IMR-90 (cell line): ENCODE measurements at regions of chr7 and their contacts with region 1.

Region 1: GRCh38 chr7:22219739-22220493 is 137.0 kb downstream of the RAPGEF5 start:
- DNase-seq: no peak
- ATAC-seq: no peak
- H3K4me3 ChIP-seq: no peak overlapping the region
- H3K27ac ChIP-seq: no peak overlapping the region
- H3K4me1 ChIP-seq: no peaks in the 10 kb centered on the region
- H3K27me3 ChIP-seq: peaks cover 2% of the 10 kb centered on the region; the same call in 1 of the 2 replicates
- CTCF ChIP-seq: no peak
- POLR2A ChIP-seq: no peak
- RAD21 ChIP-seq: no peak

Region 2: DNA sequence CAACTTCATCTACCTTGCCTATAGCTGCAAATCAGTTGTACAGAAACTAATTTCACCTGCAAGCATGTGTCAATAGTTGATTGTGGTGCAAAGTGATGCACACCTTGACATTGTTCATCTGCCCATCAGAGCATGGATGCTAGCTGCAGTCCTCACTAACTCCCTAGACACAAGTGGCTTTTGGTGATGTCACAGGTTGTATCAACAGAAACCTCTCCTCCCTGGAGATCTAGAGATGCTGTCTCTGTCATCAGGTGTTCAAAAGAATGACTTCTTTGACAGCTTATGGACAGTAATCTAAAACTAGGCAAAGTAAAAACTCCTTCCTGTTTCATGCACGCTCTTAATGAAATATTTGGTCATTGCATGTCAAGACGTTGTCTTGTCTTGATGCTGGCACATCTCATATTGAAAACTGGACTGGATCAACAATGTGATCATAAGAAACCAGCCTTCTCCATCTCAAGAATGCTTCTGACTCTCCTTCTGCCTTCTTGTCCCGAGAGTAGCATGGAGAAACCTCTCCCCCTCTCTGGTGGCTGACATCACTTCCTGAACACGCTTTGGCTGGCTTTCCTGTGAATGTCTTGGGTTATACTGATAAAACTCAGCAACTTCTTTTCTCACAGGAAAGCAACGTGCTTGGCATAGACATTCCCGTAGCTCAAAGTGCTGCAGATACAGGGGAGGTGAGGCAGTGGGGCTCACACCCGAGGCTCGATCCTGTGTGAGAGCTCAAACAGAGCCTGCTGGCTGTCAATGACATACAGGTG is 98.0 kb before region 1 on chr7:
- CTCF ChIA-PET with region 1: no interaction called
- POLR2A ChIA-PET with region 1: no interaction called
- dilution Hi-C with region 1: no loop called
- in situ Hi-C with region 1: no loop called
- intact Hi-C with region 1: no loop called
- DNase-seq: peak; percentile 33
- ATAC-seq: no peak
- H3K4me3 ChIP-seq: no peak overlapping the region
- H3K27ac ChIP-seq: no peak overlapping the region
- H3K4me1 ChIP-seq: no peaks in the 10 kb centered on the region
- H3K27me3 ChIP-seq: peaks cover 10% of the 10 kb centered on the region
- CTCF ChIP-seq: no peak
- POLR2A ChIP-seq: no peak
- RAD21 ChIP-seq: no peak

Region 3: GRCh38 chr7:22319424-22320403 is 99.8 kb after region 1 on chr7:
- CTCF ChIA-PET with region 1: no interaction called
- POLR2A ChIA-PET with region 1: no interaction called
- dilution Hi-C with region 1: no loop called
- in situ Hi-C with region 1: no loop called
- intact Hi-C with region 1: loop called (anchors 5 kb)
- DNase-seq: no peak
- ATAC-seq: no peak
- H3K4me3 ChIP-seq: no peak overlapping the region
- H3K27ac ChIP-seq: no peak overlapping the region
- H3K4me1 ChIP-seq: no peaks in the 10 kb centered on the region
- H3K27me3 ChIP-seq: no peaks in the 10 kb centered on the region
- CTCF ChIP-seq: no peak
- POLR2A ChIP-seq: no peak
- RAD21 ChIP-seq: no peak

Region 4: DNA sequence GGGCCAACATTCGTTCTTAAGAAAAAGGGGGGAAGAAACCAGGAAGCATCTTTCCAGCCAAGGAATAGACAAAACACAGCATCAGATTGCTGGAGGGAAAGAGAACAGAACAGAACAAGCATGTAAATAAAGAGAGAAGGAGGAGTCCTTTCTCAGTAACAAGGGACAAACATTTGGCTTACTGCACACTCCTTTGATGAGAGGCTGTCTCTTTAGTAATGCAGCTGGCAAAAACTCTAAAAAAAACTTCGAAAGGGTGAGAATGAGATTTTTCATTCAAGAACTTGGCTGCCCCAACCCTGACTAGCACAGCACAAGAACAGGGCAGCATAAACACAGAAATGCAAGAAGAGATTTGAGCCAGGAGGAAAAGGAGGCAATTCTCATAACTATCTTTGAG is 468.2 kb after region 1 on chr7:
- CTCF ChIA-PET with region 1: no interaction called
- POLR2A ChIA-PET with region 1: no interaction called
- dilution Hi-C with region 1: no loop called
- in situ Hi-C with region 1: no loop called
- intact Hi-C with region 1: no loop called
- DNase-seq: no peak
- ATAC-seq: no peak; the same call in 1 of the 2 replicates
- H3K4me3 ChIP-seq: no peak overlapping the region
- H3K27ac ChIP-seq: no peak overlapping the region
- H3K4me1 ChIP-seq: no peaks in the 10 kb centered on the region
- H3K27me3 ChIP-seq: no peaks in the 10 kb centered on the region
- CTCF ChIP-seq: no peak
- POLR2A ChIP-seq: no peak
- RAD21 ChIP-seq: no peak